Activated B cell treated with CpG ODN at 0.5 μM for 24 hours (primary cell): ENCODE measurements at regions of chr6 and their contacts with region 1.

Region 1: DNA sequence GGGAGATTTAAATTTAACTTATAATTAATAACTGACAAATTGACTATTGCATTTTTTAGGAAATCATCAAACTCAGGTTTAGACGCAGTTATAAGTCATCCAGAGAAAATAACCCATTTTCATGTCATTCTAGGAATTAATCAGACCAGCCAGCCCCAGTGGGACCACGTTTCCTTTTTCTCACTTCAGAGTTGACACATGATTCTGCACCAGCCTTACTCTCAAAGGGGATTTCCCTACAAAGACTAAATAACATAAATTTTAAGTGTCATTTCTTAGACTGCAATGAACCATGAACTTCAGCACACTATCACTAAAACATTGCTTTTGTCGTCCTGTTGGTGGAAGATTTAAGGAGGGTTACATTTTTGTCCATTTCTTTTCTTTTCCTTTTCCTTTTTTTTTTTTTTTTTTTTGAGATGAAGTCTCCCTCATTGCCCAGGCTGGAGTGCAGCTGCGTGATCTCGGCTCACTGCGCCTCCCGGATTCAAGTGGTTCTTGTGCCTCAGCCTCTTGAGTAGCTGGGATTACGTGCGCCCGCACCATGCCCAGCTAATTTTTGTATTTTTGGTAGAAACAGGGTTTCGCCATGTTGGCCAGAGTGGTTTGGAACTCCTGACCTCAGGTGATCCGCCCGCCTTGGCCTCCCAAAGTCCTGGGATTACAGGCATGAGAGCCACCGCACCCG is 3.6 kb downstream of the IPCEF1 start:
- DNase-seq: no peak
- ATAC-seq: peak; percentile 68
- H3K4me3 Mint-ChIP-seq: peak overlapping the region; percentile 17
- H3K27ac Mint-ChIP-seq: peak overlapping the region; percentile 22
- H3K4me1 Mint-ChIP-seq: peaks cover 38% of the 10 kb centered on the region
- H3K27me3 Mint-ChIP-seq: no peaks in the 10 kb centered on the region
- CTCF ChIP-seq: no peak

Region 2: GRCh38 chr6:154164397-154165165 is 188.5 kb before region 1 on chr6:
- CTCF ChIA-PET with region 1: no interaction called
- POLR2A ChIA-PET with region 1: no interaction called
- intact Hi-C with region 1: no loop called
- DNase-seq: no peak
- ATAC-seq: no peak
- H3K4me3 Mint-ChIP-seq: no peak overlapping the region
- H3K27ac Mint-ChIP-seq: no peak overlapping the region
- H3K4me1 Mint-ChIP-seq: no peaks in the 10 kb centered on the region
- H3K27me3 Mint-ChIP-seq: no peaks in the 10 kb centered on the region
- CTCF ChIP-seq: no peak

Region 3: DNA sequence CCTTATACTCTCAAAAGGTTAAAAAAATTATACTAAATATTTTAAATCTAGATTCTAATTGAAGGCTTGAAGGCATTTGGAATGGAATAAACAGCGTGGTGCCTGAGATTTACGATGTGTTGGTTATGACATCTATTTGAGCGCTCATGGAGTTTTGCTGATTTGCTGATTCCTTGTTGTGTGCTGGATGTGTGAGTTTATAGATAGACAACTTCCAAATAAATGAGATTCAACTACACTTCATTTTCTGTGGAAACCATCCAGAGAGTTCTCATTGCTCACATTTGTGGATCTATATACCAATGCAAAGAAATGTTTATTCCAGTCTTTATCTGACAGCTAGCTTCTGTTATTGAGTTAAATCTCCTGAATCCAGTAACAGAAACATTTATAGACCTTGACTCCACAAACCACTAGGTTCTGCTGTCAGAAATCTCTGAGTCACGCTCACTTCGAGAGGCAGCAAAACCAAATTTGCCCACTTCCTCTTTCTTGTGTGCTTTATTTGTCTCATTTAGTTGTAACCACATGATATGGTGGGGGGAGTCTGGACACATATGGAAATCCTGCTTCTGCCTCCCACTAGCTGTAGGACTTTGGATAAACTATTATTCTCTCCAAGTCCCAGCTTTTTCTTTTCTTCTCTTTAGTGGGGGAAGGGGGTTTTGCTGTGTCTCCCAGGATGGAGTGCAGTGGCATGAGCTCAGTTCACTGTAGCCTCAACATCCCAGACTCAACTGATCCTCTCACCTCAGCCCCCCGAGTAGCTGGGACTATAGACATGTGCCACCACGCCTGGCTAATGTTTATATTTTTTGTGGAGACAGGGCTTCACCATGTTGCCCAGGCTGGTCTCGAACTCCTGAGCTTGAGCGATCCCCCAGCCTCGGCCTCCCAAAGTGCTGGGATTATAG is 50.9 kb before region 1 on chr6:
- CTCF ChIA-PET with region 1: no interaction called
- POLR2A ChIA-PET with region 1: interaction called, 4 read pairs
- intact Hi-C with region 1: loop called (anchors 1 kb)
- DNase-seq: no peak
- ATAC-seq: peak; percentile 61
- H3K4me3 Mint-ChIP-seq: peak overlapping the region; percentile 24
- H3K27ac Mint-ChIP-seq: no peak overlapping the region
- H3K4me1 Mint-ChIP-seq: peaks cover 28% of the 10 kb centered on the region
- H3K27me3 Mint-ChIP-seq: no peaks in the 10 kb centered on the region
- CTCF ChIP-seq: no peak